ENCODE measurements at regions of chr9 and their contacts with region 1.

Region 1: DNA sequence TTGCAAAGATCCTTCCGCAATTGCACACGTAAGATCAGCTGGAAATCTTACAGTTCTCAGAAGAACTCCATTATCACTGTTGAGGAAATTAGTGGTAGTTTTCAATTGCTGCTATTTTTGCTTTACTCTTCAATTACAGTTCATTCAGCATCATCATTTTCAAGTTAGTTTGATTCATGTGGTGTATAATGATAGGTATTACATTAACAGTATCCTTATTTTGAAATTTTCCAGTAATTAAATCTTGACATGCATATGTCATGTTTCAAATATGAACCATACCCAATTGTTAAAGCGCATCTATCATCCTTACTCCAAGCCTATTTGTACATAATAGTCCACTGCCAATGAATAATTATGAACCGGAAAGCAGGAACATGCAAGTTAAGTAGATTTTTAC is 60.3 kb downstream of the NR6A1 start:
- DNase-seq: no peak
- H3K4me3 Mint-ChIP-seq: no peak overlapping the region
- H3K27ac Mint-ChIP-seq: no peak overlapping the region
- H3K4me1 Mint-ChIP-seq: peaks cover 3% of the 10 kb centered on the region
- H3K27me3 Mint-ChIP-seq: peaks cover 27% of the 10 kb centered on the region

Region 2: GRCh38 chr9:124583128-124583527 is 127.6 kb before region 1 on chr9:
- CTCF ChIA-PET with region 1: no interaction called
- POLR2A ChIA-PET with region 1: no interaction called
- DNase-seq: no peak
- H3K4me3 Mint-ChIP-seq: no peak overlapping the region
- H3K27ac Mint-ChIP-seq: no peak overlapping the region
- H3K4me1 Mint-ChIP-seq: no peaks in the 10 kb centered on the region
- H3K27me3 Mint-ChIP-seq: peaks cover 5% of the 10 kb centered on the region

Region 3: GRCh38 chr9:124617471-124618141 is 93.2 kb before region 1 on chr9:
- CTCF ChIA-PET with region 1: interaction called, 18 read pairs
- POLR2A ChIA-PET with region 1: no interaction called
- DNase-seq: peak; percentile 82
- H3K4me3 Mint-ChIP-seq: no peak overlapping the region
- H3K27ac Mint-ChIP-seq: no peak overlapping the region
- H3K4me1 Mint-ChIP-seq: no peaks in the 10 kb centered on the region
- H3K27me3 Mint-ChIP-seq: peaks cover 10% of the 10 kb centered on the region

Measured in activated CD4-positive, alpha-beta T cell treated with anti-CD3 and anti-CD28 coated beads, Interleukin-2, amount 10 ng/mL, durations not matched to agents 7 days and 5 days (primary cell).